ENCODE measurements at regions of chr3 and their contacts with region 1.

Region 1: GRCh38 chr3:24088782-24089181 is 143.7 kb downstream of the NR1D2 start:
- DNase-seq: peak; percentile 58
- ATAC-seq: peak; percentile 95
- H3K4me3 ChIP-seq: no peak overlapping the region
- H3K27ac ChIP-seq: no peak overlapping the region
- H3K4me1 ChIP-seq: no peaks in the 10 kb centered on the region
- H3K27me3 ChIP-seq: no peaks in the 10 kb centered on the region
- CTCF ChIP-seq: peak; percentile 79

Region 2: GRCh38 chr3:24145981-24146822 is 57.4 kb after region 1 on chr3:
- CTCF ChIA-PET with region 1: no interaction called
- POLR2A ChIA-PET with region 1: no interaction called
- intact Hi-C with region 1: loop called (anchors 5 kb)
- DNase-seq: peak; percentile 76
- ATAC-seq: peak; percentile 92
- H3K4me3 ChIP-seq: peak overlapping the region; percentile 38; the same call in 1 of the 2 replicates
- H3K27ac ChIP-seq: peak overlapping the region; percentile 30
- H3K4me1 ChIP-seq: peaks cover 18% of the 10 kb centered on the region
- H3K27me3 ChIP-seq: no peaks in the 10 kb centered on the region
- CTCF ChIP-seq: no peak

Region 3: DNA sequence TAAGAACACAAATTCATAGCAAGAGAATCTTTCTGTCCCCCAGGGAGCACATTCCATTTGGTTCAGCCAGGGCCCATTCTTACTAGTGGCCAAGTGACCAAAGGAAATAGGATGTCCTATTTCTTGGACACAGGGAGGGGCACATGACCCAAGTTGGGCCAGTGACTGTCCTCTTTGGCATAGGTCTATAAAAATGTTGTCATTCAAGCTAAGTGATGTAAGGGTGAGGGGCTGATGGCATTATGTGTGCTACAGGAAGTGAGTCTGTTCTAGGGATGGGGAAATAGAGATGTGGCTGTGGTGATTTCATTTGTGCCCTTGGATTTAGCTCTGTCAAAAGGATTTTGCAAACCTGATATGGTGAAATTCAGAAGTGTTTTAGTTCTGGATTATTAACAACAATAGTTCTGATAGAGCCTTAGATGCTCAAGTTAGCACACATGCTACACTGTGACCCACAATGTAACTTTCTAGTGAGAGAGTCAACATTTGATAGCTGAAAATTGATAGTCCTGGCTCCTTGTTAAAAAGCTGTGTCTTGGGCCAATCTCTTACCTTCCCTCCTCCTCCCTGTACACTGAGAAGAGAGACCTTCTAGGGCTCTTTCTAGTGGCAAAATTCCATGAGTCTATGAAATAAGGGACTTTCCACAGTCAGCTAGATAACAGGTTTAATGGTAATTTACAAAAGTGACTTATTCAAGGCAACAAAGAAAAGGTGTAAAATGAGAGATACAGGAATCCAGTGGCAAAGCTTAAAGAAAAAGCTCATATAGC is 288.6 kb after region 1 on chr3:
- CTCF ChIA-PET with region 1: no interaction called
- POLR2A ChIA-PET with region 1: no interaction called
- intact Hi-C with region 1: no loop called
- DNase-seq: peak; percentile 14
- ATAC-seq: no peak
- H3K4me3 ChIP-seq: no peak overlapping the region
- H3K27ac ChIP-seq: no peak overlapping the region
- H3K4me1 ChIP-seq: peaks cover 18% of the 10 kb centered on the region
- H3K27me3 ChIP-seq: no peaks in the 10 kb centered on the region
- CTCF ChIP-seq: no peak

Measured in PC-3 (cell line).